PC-9 (cell line): ENCODE measurements at regions of chr17 and their contacts with region 1.

Region 1: GRCh38 chr17:32519228-32520103 is 32.7 kb downstream of the CDK5R1 start:
- DNase-seq: peak in 1 of 2 experiments; percentile 56
- H3K4me3 ChIP-seq: peak overlapping the region; percentile 56
- H3K27ac ChIP-seq: no peak overlapping the region
- H3K4me1 ChIP-seq: 0 out of 2 replicates have a peak, but pooled peaks cover 4% of the 10 kb centered on the region
- H3K27me3 ChIP-seq: no peaks in the 10 kb centered on the region
- CTCF ChIP-seq: no peak

Region 2: DNA sequence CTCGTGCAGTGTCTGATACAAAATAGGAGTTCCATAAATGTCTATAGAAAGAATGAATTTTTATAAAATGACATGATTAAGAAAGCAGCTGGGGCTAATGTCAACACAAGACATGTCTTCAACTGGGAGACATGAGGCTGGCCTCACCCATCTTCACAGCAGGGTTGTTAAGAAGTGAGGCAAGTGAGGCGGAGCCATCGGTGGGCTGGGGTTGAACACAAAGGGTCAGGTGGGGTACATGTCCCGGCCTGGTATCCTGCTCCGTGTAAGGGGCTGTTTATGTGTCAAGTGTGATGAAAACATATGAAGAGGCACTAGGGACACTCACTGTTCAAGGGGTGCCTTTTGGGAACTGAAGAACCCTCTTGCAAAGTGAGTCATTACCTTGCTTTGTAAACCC is 10.5 kb before region 1 on chr17:
- CTCF ChIA-PET with region 1: interaction called, 13 read pairs
- POLR2A ChIA-PET with region 1: no interaction called
- intact Hi-C with region 1: no loop called
- DNase-seq: no peak
- H3K4me3 ChIP-seq: no peak overlapping the region
- H3K27ac ChIP-seq: no peak overlapping the region
- H3K4me1 ChIP-seq: no peaks in the 10 kb centered on the region
- H3K27me3 ChIP-seq: no peaks in the 10 kb centered on the region
- CTCF ChIP-seq: no peak

Region 3: DNA sequence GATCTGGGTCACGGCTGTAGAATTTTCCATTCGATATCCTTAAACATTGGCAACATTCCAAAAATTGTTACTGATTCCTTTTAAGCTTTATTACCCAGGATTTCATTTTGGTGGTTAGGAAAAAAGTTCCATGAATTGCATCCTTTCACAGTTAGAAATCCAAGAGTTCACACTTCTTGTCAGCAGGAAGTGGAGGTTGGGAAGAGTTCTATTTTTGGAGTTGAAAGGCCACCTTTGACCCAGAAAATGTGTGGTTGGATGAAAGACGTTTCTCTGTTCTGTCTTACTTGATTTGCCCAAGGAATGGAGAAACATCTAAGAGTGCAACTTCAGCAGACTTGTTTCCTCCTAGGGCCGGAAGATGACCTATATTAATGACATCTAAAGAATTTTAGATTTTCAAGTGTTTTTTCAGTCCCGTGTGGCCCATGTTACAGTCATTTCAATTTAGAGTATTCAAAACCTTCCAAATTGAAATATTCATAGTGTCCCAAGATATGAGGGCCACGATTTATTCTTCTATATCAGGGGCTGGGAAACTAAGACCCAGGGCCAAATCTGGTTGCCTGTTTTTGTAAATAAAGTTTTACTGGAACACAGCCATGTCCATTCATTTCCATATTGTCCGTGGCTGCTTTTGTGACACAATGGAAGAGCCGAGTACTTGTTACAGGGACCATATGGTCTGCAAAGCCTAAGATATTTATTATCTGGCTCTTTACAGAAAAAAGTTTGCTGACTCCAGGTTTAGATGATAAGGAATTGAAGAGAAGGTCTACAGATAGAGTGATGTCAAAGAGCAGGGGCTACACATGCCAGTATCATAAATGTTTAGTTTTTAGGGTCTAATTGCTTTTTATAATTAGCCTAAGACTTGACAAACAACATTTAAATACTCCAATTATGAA is 17.5 kb after region 1 on chr17:
- CTCF ChIA-PET with region 1: no interaction called
- POLR2A ChIA-PET with region 1: no interaction called
- intact Hi-C with region 1: no loop called
- DNase-seq: no peak
- H3K4me3 ChIP-seq: no peak overlapping the region
- H3K27ac ChIP-seq: no peak overlapping the region
- H3K4me1 ChIP-seq: no peaks in the 10 kb centered on the region
- H3K27me3 ChIP-seq: no peaks in the 10 kb centered on the region
- CTCF ChIP-seq: no peak

Region 4: DNA sequence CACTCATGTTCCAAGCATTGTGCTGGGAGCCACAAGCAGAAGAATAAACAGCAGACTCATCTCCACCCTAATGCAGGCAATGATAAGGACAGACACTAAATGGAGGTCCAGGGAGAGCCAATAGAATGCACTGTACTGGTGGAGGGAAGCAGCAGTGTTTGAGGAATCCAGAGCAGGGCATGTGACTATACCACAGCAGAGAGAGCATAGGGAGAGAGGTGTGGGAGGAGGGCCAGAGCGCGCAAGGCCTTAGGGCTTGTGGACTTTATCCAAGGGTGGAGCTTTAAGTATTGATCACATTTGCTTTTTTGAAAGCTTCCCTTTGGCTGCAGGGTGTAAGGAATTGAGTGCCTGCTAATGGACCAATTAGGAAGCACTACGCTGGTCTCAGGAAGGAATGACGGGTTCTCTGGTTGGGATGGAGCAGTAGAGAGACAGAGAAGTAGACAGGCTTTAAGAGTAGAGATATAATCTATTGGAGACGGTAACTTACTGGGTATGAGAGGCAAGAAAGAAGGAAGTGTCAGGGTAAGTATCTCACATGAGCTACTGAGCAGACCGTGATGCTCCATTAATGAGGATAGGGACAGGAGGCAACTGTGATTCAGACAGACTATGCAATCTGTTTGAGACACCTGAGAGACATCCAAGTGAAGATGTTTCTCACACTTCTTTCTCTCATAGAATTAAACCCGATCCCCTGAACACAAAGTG is 275.2 kb after region 1 on chr17:
- CTCF ChIA-PET with region 1: interaction called, 18 read pairs
- POLR2A ChIA-PET with region 1: no interaction called
- intact Hi-C with region 1: no loop called
- DNase-seq: no peak
- H3K4me3 ChIP-seq: no peak overlapping the region
- H3K27ac ChIP-seq: no peak overlapping the region
- H3K4me1 ChIP-seq: no peaks in the 10 kb centered on the region
- H3K27me3 ChIP-seq: no peaks in the 10 kb centered on the region
- CTCF ChIP-seq: no peak